Activated CD8-positive, alpha-beta T cell treated with anti-CD3 and anti-CD28 coated beads for 36 hours (primary cell): ENCODE measurements at regions of chr14 and their contacts with region 1.

Region 1: GRCh38 chr14:51884086-51884927 is 23.9 kb downstream of the GNG2 start:
- DNase-seq: peak; percentile 20
- ATAC-seq: peak; percentile 57
- H3K4me3 Mint-ChIP-seq: peak overlapping the region; percentile 55
- H3K27ac Mint-ChIP-seq: peak overlapping the region; percentile 80
- H3K4me1 Mint-ChIP-seq: peaks cover 75% of the 10 kb centered on the region
- H3K27me3 Mint-ChIP-seq: no peaks in the 10 kb centered on the region
- CTCF ChIP-seq: no peak

Region 2: DNA sequence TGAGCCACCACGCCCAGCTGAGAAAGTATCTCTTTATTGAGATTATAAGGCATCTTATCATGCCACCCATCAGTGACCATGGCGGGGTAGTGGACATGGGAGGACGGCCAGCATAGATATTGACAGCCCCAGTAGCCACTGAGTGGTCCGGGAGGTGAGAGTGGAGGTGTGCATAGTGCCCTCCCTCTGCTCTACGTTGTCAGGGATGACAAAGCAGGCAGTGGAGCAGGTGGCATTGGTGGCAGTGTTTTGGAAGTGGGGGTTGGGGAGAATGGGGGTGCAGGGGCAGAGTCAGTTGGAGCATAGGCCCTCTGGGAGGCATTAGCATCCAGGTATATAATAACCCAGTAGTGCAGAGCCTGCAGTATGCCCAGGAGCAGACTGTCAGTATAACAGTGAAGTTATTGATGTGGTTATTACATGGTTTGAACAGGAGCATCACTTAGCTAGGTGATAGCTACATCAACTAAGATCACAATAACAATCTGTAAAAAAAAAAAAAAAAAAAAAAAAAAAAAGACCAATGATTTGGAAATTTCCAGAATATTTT is 17.2 kb after region 1 on chr14:
- CTCF ChIA-PET with region 1: interaction called, 15 read pairs
- POLR2A ChIA-PET with region 1: interaction called, 5 read pairs
- intact Hi-C with region 1: no loop called
- DNase-seq: peak; percentile 8
- ATAC-seq: no peak
- H3K4me3 Mint-ChIP-seq: no peak overlapping the region
- H3K27ac Mint-ChIP-seq: peak overlapping the region; percentile 52
- H3K4me1 Mint-ChIP-seq: peaks cover 64% of the 10 kb centered on the region
- H3K27me3 Mint-ChIP-seq: no peaks in the 10 kb centered on the region
- CTCF ChIP-seq: no peak

Region 3: GRCh38 chr14:51922624-51923023 is 38.3 kb after region 1 on chr14:
- CTCF ChIA-PET with region 1: no interaction called
- POLR2A ChIA-PET with region 1: no interaction called
- intact Hi-C with region 1: no loop called
- DNase-seq: no peak
- ATAC-seq: no peak
- H3K4me3 Mint-ChIP-seq: no peak overlapping the region
- H3K27ac Mint-ChIP-seq: no peak overlapping the region
- H3K4me1 Mint-ChIP-seq: peaks cover 49% of the 10 kb centered on the region
- H3K27me3 Mint-ChIP-seq: no peaks in the 10 kb centered on the region
- CTCF ChIP-seq: no peak

Region 4: GRCh38 chr14:51938137-51938536 is 53.8 kb after region 1 on chr14:
- CTCF ChIA-PET with region 1: no interaction called
- POLR2A ChIA-PET with region 1: no interaction called
- intact Hi-C with region 1: no loop called
- DNase-seq: no peak
- ATAC-seq: no peak
- H3K4me3 Mint-ChIP-seq: no peak overlapping the region
- H3K27ac Mint-ChIP-seq: no peak overlapping the region
- H3K4me1 Mint-ChIP-seq: peaks cover 51% of the 10 kb centered on the region
- H3K27me3 Mint-ChIP-seq: no peaks in the 10 kb centered on the region
- CTCF ChIP-seq: no peak